PC-9 (cell line): ENCODE measurements at regions of chr22 and their contacts with region 1.

Region 1: GRCh38 chr22:44363272-44363979 is 50.7 kb upstream of the SHISAL1 start:
- DNase-seq: peak; percentile 88 to 92
- H3K4me3 ChIP-seq: peak overlapping the region; percentile 30; the same call in 1 of the 2 replicates
- H3K27ac ChIP-seq: peak overlapping the region; percentile 90
- H3K4me1 ChIP-seq: peaks cover 57% of the 10 kb centered on the region
- H3K27me3 ChIP-seq: no peaks in the 10 kb centered on the region
- CTCF ChIP-seq: no peak

Region 2: GRCh38 chr22:44351685-44352377 is 11.6 kb before region 1 on chr22:
- CTCF ChIA-PET with region 1: no interaction called
- POLR2A ChIA-PET with region 1: no interaction called
- intact Hi-C with region 1: loop called (anchors 1 kb)
- DNase-seq: peak; percentile 87 to 93
- H3K4me3 ChIP-seq: peak overlapping the region; percentile 1; the same call in 1 of the 2 replicates
- H3K27ac ChIP-seq: peak overlapping the region; percentile 76
- H3K4me1 ChIP-seq: peaks cover 22% of the 10 kb centered on the region
- H3K27me3 ChIP-seq: no peaks in the 10 kb centered on the region
- CTCF ChIP-seq: no peak

Region 3: DNA sequence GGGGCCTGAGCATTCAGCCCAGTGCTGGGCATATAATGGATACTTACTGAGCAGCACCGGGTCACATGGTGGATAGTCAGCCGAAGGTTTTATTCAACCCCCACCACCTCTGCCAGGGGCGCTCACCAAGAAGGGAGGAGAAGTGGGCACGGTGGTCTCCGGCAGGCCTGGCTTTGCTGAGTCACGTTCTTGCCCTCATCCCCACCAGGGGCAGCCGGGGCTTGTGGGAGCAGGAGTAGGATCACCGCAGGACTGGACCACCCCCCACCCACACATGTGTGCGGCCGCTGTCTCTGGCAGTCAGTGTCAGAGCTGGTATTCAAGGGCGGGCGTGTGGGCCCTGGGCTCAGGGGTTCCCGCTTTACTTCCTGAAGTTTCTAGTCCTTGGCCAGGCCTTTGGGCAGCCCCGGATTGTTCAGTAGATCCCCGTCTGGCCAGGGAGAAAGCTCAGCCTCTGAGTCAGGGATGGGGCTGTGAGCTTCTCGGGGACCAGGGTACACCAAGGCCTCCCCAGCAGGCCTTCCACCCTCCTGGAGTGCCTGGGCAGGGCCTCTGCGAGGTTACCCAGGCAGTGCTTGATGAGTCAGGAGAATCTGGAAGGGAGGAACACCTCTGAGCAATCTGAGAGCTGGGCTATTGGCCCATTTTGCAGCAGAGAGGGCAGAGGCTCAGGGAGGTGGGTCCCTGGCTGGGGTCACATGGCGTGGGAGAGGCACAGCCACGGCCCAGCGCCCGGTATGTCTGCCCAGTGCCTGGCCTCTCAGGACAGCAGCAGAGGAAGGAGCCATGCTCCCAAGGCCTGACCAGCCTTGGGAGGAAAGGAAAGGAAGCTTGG is 74.0 kb after region 1 on chr22:
- CTCF ChIA-PET with region 1: no interaction called
- POLR2A ChIA-PET with region 1: no interaction called
- intact Hi-C with region 1: no loop called
- DNase-seq: no peak
- H3K4me3 ChIP-seq: no peak overlapping the region
- H3K27ac ChIP-seq: no peak overlapping the region
- H3K4me1 ChIP-seq: no peaks in the 10 kb centered on the region
- H3K27me3 ChIP-seq: no peaks in the 10 kb centered on the region
- CTCF ChIP-seq: no peak

Region 4: GRCh38 chr22:44448271-44448830 is 84.9 kb after region 1 on chr22:
- CTCF ChIA-PET with region 1: no interaction called
- POLR2A ChIA-PET with region 1: no interaction called
- intact Hi-C with region 1: loop called (anchors 1 kb)
- DNase-seq: peak; percentile 89 to 94
- H3K4me3 ChIP-seq: peak overlapping the region; percentile 24; the same call in 1 of the 2 replicates
- H3K27ac ChIP-seq: peak overlapping the region; percentile 89
- H3K4me1 ChIP-seq: peaks cover 72% of the 10 kb centered on the region
- H3K27me3 ChIP-seq: no peaks in the 10 kb centered on the region
- CTCF ChIP-seq: no peak

Region 5: DNA sequence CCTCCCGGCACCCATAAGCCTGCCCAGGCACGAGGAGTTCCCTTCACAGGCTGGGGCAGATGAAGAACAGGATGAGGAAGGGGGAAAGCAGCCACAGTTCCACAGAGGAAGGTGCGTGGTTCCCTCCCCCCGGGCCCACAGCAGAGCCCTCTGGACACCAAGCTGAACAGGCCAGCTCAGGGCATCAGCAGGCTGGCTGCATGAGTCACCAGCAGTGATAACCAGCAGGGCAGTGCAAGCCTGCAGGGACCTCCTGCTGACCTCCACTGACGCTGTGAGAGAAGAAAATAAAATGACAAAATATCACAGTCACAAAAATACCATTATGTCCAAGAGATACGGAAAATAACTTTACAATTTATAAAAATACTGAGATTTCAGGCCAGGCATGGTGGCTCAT is 123.1 kb after region 1 on chr22:
- CTCF ChIA-PET with region 1: no interaction called
- POLR2A ChIA-PET with region 1: no interaction called
- intact Hi-C with region 1: loop called (anchors 5 kb)
- DNase-seq: peak; percentile 57 to 77
- H3K4me3 ChIP-seq: no peak overlapping the region
- H3K27ac ChIP-seq: no peak overlapping the region
- H3K4me1 ChIP-seq: peaks cover 39% of the 10 kb centered on the region
- H3K27me3 ChIP-seq: no peaks in the 10 kb centered on the region
- CTCF ChIP-seq: no peak

Region 6: GRCh38 chr22:44497218-44497904 is 133.9 kb after region 1 on chr22:
- CTCF ChIA-PET with region 1: no interaction called
- POLR2A ChIA-PET with region 1: no interaction called
- intact Hi-C with region 1: loop called (anchors 5 kb)
- DNase-seq: peak in 1 of 2 experiments; percentile 46
- H3K4me3 ChIP-seq: peak overlapping the region; percentile 98
- H3K27ac ChIP-seq: peak overlapping the region; percentile 78
- H3K4me1 ChIP-seq: peaks cover 24% of the 10 kb centered on the region
- H3K27me3 ChIP-seq: no peaks in the 10 kb centered on the region
- CTCF ChIP-seq: no peak

Region 7: DNA sequence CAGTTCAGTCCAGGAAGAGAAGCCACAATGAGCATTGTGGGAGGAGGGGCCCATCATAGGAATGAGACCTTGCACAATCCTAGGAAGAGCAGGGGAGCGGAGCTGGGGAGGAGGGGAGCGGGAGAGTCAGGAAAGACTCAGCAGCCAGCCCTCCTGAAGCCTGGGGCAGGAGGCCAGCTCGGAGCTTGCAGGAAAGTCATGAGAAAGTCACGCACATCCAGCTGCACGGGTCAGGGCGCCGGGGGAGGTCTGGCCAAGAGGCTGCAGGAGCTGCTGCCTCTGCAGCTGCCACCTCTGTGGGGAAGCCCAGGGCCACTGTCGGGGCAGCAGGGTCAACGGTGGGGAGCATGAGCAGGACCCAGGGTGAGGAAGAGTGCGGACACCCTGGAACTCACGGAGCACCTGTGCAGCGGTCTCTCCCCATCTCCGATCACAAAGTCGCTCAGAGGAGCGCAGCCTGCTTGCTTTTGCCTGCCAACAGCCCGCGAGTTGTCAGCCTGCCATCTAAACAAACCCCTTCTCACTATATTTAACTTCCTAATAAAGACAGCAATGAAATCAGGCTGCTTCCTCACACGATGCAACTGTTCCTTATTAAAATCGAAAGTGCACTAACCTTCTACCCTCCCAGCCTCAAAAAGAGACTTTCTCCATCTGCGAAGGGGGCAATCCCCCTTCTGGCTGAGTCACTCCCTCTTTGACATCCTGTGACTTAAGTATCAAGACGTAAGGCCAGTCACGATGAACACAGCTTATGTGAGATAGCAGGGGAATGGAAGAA is 187.5 kb after region 1 on chr22:
- CTCF ChIA-PET with region 1: no interaction called
- POLR2A ChIA-PET with region 1: no interaction called
- intact Hi-C with region 1: loop called (anchors 5 kb)
- DNase-seq: peak; percentile 80 to 93
- H3K4me3 ChIP-seq: peak overlapping the region; percentile 51
- H3K27ac ChIP-seq: peak overlapping the region; percentile 95
- H3K4me1 ChIP-seq: peaks cover 30% of the 10 kb centered on the region
- H3K27me3 ChIP-seq: no peaks in the 10 kb centered on the region
- CTCF ChIP-seq: no peak